ENCODE measurements at regions of chr3 and their contacts with region 1.

Region 1: DNA sequence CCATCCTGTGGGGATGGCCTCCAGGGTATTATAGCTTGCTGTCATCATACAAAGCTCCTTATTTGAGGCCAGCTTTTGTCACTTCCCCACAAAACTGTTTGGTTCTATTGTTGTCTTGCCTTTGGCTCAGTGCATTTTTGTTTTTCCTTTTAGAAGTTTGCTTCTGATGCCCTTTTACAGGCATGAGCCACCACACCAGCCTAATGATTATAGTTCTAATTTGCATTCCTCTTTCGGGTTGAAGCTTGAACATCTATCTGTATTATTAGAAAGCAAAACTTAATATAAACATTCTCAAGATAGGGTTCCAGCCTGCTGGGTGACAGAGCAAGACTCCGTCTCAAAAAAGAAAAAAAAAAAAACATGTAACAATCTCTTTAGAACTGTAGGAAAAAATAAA is 39.8 kb downstream of the SMARCC1 start:
- DNase-seq: no peak
- ATAC-seq: no peak
- H3K4me3 ChIP-seq: no peak overlapping the region
- H3K27ac ChIP-seq: no peak overlapping the region
- H3K4me1 ChIP-seq: no peaks in the 10 kb centered on the region; a peak in 1 of 5 replicates
- H3K27me3 ChIP-seq: no peaks in the 10 kb centered on the region
- CTCF ChIP-seq: no peak
- EP300 ChIP-seq: no peak
- POLR2A ChIP-seq: no peak
- RAD21 ChIP-seq: no peak

Region 2: GRCh38 chr3:47731061-47731460 is 10.9 kb before region 1 on chr3:
- CTCF ChIA-PET with region 1: no interaction called
- POLR2A ChIA-PET with region 1: interaction called, 10 read pairs
- in situ Hi-C with region 1: no loop called
- intact Hi-C with region 1: no loop called
- DNase-seq: no peak
- ATAC-seq: no peak
- H3K4me3 ChIP-seq: no peak overlapping the region
- H3K27ac ChIP-seq: no peak overlapping the region
- H3K4me1 ChIP-seq: peaks cover 0 to 3% of the 10 kb centered on the region in 2 experiments; a peak in 1 of 5 replicates
- H3K27me3 ChIP-seq: no peaks in the 10 kb centered on the region
- CTCF ChIP-seq: no peak
- EP300 ChIP-seq: no peak
- POLR2A ChIP-seq: no peak
- RAD21 ChIP-seq: no peak